Ovary (tissue), 10 donors: ENCODE measurements at regions of chr1 and their contacts with region 1.

Region 1: GRCh38 chr1:27436204-27437159 is 44.1 kb downstream of the GPR3 start:
- DNase-seq: no peak
- H3K4me3 ChIP-seq: no peak overlapping the region
- H3K27ac ChIP-seq: no peak overlapping the region
- H3K4me1 ChIP-seq: peaks cover 23% of the 10 kb centered on the region
- H3K27me3 ChIP-seq: no peaks in the 10 kb centered on the region
- CTCF ChIP-seq: no peak
- EP300 ChIP-seq: no peak
- POLR2A ChIP-seq: no peak

Region 2: GRCh38 chr1:27257155-27257554 is 179.3 kb before region 1 on chr1:
- intact Hi-C with region 1: no loop called
- DNase-seq: no peak
- H3K4me3 ChIP-seq: no peak overlapping the region
- H3K27ac ChIP-seq: no peak overlapping the region
- H3K4me1 ChIP-seq: peaks cover 2% of the 10 kb centered on the region
- H3K27me3 ChIP-seq: no peaks in the 10 kb centered on the region
- CTCF ChIP-seq: no peak
- EP300 ChIP-seq: no peak
- POLR2A ChIP-seq: no peak

Region 3: DNA sequence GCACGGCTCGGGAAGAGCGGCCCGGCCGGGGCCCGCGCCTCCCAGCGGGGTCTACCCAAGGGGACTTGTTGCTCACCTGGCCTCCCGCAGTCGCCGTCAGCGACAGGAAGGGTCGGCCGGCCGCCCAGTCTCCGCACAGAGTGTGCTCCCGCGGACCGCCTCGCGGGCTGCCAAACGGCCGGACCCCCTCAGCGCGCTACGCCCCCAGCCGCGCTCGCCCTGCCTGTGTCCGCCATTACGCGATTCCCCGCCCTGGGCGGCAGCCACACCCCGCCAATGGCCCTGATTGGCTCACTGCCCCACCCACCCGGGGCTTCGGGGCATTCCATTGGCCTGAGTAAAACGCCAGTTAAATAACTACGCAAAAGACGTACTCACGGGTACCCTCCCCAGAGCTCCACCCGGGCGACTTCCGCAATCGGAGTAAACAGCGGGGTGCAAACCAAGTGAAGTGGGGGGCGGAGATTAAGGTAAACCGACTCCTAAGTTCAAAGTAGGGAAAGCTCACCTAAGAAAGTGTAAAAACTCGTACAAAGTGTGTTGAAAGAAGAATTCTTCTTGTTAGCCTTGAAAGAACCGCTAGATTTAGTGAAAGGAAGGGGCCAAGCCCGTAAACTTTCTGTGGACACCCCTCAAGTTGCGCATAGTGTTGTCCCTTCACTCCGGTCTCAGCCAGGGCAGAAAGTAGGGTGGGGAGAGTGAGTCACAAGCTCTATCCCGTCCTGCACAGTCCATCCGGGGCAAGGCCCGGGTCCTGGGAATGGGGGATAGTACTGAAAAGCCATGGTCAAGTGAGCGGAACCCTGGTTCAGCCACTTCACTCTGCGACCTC is 53.6 kb after region 1 on chr1 and contains the start of gene WASF2:
- intact Hi-C with region 1: loop called in 3 of 4 experiments (anchors 10 kb)
- DNase-seq: peak; percentile 97 to 98 (median 98)
- H3K4me3 ChIP-seq: peak within 1 kb of the TSS; percentile 100
- H3K27ac ChIP-seq: peak within 1 kb of the TSS; percentile 95 to 99
- H3K4me1 ChIP-seq: peaks cover 8% of the 10 kb centered on the region
- H3K27me3 ChIP-seq: no peaks in the 10 kb centered on the region
- CTCF ChIP-seq: peak in 1 of 3 donors; percentile 11
- EP300 ChIP-seq: no peak
- POLR2A ChIP-seq: peak; percentile 93
- total RNA-seq, gene WASF2: 28.0 to 163 (median 153) TPM